Mammary epithelial cell (primary cell): ENCODE measurements at regions of chr16 and their contacts with region 1.

Region 1: GRCh38 chr16:85574672-85575475 is 38.2 kb upstream of the GSE1 start:
- DNase-seq: no peak
- H3K4me3 ChIP-seq: no peak overlapping the region
- H3K27ac ChIP-seq: no peak overlapping the region
- H3K4me1 ChIP-seq: peaks cover 22% of the 10 kb centered on the region
- H3K27me3 ChIP-seq: no peaks in the 10 kb centered on the region
- CTCF ChIP-seq: no peak

Region 2: DNA sequence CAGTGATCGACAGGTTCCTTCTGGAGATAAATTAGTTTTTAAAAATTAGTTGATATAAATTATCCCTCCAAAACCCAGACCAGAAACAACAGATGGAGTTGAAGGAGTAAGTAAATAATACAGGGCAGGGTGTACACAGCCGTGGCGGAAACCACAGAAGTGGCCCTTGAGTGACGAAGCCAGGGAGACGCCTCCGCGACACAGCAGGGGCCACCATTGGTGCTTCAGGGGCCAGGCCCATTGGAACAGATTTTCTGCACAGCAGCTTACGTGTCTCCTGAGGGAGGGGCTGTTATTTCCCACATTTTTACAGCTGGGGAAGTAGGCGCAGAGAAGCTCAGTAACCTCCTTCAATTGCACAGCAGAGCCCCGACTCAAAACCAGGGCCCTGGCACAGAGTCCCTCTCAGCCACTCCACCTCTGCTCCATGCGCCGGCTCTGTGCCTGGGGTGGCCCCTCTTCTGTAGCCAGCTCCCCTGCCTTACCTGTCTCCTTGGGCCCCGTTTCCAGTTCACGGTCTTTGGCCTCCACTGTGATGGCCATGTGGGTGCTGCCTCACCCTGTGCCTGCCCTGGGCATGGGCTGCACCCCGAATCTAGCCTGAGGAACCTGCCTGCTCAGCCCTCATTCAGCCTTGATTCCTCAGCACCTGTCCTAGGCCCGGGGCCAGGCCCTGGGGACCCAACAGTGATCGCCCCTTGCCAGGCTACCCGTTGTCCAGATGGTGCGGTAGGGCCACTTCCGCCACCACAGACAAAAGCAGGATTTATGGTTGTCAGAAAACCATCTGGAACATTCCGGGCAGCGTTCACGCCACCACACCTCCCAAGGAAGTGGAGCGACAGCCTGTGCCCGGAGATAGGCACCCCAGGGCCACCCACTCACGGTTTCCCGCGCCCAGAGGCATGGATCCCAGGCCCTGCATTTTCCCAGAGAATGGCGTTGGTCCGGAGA is 90.2 kb before region 1 on chr16:
- CTCF ChIA-PET with region 1: no interaction called
- dilution Hi-C with region 1: loop called (anchors 5 kb)
- in situ Hi-C with region 1: no loop called
- intact Hi-C with region 1: no loop called
- DNase-seq: no peak
- H3K4me3 ChIP-seq: no peak overlapping the region
- H3K27ac ChIP-seq: no peak overlapping the region
- H3K4me1 ChIP-seq: no peaks in the 10 kb centered on the region
- H3K27me3 ChIP-seq: no peaks in the 10 kb centered on the region
- CTCF ChIP-seq: no peak

Region 3: DNA sequence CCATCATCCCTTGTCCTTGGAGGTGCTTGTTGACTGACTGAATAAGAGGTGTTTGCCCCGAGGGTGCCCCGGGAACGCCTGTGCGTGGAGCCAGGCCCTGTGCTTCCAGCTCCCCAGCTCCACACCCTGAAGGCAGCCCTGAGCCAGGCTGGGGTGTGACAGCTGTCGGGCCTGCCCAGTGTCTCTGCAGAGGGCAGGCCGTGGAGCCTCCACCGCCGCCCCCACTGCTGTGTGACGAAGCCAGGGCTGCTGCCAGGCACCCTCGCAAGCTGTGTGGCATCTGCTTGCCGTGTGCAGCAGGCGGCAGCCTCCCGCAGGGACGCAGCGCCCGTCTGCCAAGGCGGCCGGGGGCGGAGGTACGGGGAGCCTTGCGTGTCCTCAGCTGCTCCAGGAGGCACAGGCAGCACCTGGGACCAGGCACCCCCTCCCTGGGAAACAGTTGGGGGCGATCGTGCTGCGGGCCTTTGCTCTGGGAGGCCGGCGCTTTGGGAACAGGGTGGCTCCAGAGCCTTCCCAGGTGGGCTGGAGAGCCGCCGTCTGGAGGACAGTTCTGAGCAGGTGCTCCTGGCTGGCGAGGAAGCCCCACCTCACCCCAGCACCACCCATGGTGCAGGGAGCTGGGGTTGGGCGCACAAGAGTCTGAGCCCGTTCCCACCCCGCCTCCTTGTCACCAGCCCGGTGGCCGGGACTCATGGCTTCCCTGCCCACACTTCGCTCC is 64.8 kb after region 1 on chr16:
- CTCF ChIA-PET with region 1: no interaction called
- dilution Hi-C with region 1: no loop called
- in situ Hi-C with region 1: no loop called
- intact Hi-C with region 1: no loop called
- DNase-seq: no peak
- H3K4me3 ChIP-seq: no peak overlapping the region
- H3K27ac ChIP-seq: no peak overlapping the region
- H3K4me1 ChIP-seq: peaks cover 43% of the 10 kb centered on the region
- H3K27me3 ChIP-seq: no peaks in the 10 kb centered on the region
- CTCF ChIP-seq: peak in 1 of 2 donors; percentile 46